CD14-positive monocyte (primary cell): ENCODE measurements at regions of chr4 and their contacts with region 1.

Region 1: DNA sequence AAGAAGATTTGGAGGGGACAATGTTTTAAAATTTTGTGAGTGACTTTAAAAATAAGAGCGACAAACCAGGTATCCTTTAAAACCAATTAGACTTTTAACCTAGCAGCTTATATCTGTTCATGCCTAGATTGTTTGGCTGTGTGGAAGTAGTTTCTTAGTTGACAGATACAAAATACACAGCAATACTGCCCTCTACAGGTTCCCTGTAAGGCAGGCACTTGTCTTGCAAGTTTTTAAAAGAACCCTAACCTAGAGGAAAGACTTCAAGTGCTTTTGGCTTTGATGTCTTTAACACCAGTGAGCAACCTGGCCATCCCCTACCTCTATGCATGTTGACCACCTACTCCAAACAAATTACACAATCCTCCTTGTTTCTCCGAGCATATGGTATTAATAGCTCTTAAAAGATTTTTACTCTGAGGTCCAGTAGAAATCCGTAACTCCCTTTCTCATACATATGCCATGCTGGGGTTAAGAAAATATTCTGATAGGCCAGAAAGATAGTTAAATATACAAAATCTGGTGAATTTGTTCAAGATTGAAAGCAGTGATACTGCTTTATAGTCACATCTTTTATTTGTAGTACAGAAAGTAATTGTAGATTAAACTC is 273.0 kb downstream of the ARHGAP24 start:
- DNase-seq: peak; percentile 60 to 83 (median 71)
- H3K4me3 ChIP-seq: no peak overlapping the region
- H3K4me3 Mint-ChIP-seq: no peak overlapping the region
- H3K27ac ChIP-seq: no peak overlapping the region
- H3K27ac Mint-ChIP-seq: no peak overlapping the region
- H3K4me1 ChIP-seq: peaks cover 10 to 20% of the 10 kb centered on the region in 2 donors
- H3K4me1 Mint-ChIP-seq: peaks cover 21% of the 10 kb centered on the region
- H3K27me3 ChIP-seq: no peaks in the 10 kb centered on the region
- H3K27me3 Mint-ChIP-seq: no peaks in the 10 kb centered on the region
- CTCF ChIP-seq: peak; percentile 82

Region 2: DNA sequence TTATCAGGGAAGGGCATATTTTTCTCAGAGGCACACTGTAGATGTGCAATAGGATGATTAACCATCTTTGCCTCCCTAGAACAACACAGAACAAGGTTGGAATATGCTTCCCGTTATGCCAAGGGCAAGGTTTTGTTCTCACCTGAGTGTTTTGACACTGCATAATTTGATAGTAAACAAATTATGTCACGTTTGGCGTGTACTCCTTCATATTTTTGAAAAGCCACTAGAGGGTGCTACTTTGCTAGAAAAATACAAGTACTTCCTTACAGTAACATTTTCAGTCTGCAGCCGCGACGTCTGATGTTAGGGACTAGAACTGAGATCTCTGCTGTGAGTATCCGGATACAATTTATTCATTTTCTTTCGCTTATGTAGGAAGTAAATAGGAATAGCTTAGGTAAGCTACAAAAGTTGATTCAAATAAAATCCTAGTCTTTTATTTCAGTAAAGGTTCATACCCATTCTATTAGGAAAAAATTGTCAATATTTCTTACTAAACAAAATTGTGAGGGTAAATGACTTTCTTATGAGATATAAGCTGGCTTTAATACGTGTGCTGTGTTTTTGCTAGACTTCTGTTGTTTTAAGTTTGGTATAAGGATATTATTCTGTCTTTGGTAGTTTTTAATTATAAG is 600.4 kb before region 1 on chr4:
- intact Hi-C with region 1: loop called in 1 of 2 experiments (anchors 10 kb)
- DNase-seq: peak; percentile 24 to 53 (median 43)
- H3K4me3 ChIP-seq: no peak overlapping the region
- H3K4me3 Mint-ChIP-seq: peak overlapping the region in 1 of 2 donors; percentile 31
- H3K27ac ChIP-seq: no peak overlapping the region
- H3K27ac Mint-ChIP-seq: no peak overlapping the region
- H3K4me1 ChIP-seq: no peaks in the 10 kb centered on the region
- H3K4me1 Mint-ChIP-seq: peaks cover 2% of the 10 kb centered on the region
- H3K27me3 ChIP-seq: peaks cover 0 to 2% of the 10 kb centered on the region in 2 donors
- H3K27me3 Mint-ChIP-seq: peaks cover 0 to 3% (median 2%) of the 10 kb centered on the region in 3 donors
- CTCF ChIP-seq: peak; percentile 80

Region 3: GRCh38 chr4:85423431-85423830 is 324.6 kb before region 1 on chr4:
- intact Hi-C with region 1: loop called in 1 of 2 experiments (anchors 10 kb)
- DNase-seq: no peak
- H3K4me3 ChIP-seq: no peak overlapping the region
- H3K4me3 Mint-ChIP-seq: no peak overlapping the region
- H3K27ac ChIP-seq: no peak overlapping the region
- H3K27ac Mint-ChIP-seq: no peak overlapping the region
- H3K4me1 ChIP-seq: no peaks in the 10 kb centered on the region
- H3K4me1 Mint-ChIP-seq: no peaks in the 10 kb centered on the region
- H3K27me3 ChIP-seq: no peaks in the 10 kb centered on the region
- H3K27me3 Mint-ChIP-seq: peaks cover 1 to 6% (median 5%) of the 10 kb centered on the region in 3 donors
- CTCF ChIP-seq: no peak

Region 4: GRCh38 chr4:85607624-85608023 is 140.4 kb before region 1 on chr4:
- intact Hi-C with region 1: no loop called
- DNase-seq: peak in 1 of 3 donors; percentile 3
- H3K4me3 ChIP-seq: no peak overlapping the region
- H3K4me3 Mint-ChIP-seq: no peak overlapping the region
- H3K27ac ChIP-seq: no peak overlapping the region
- H3K27ac Mint-ChIP-seq: peak overlapping the region in 1 of 7 donors; percentile 64
- H3K4me1 ChIP-seq: no peaks in the 10 kb centered on the region
- H3K4me1 Mint-ChIP-seq: peaks cover 1% of the 10 kb centered on the region
- H3K27me3 ChIP-seq: no peaks in the 10 kb centered on the region
- H3K27me3 Mint-ChIP-seq: peaks cover 0 to 4% (median 2%) of the 10 kb centered on the region in 3 donors
- CTCF ChIP-seq: no peak

Region 5: DNA sequence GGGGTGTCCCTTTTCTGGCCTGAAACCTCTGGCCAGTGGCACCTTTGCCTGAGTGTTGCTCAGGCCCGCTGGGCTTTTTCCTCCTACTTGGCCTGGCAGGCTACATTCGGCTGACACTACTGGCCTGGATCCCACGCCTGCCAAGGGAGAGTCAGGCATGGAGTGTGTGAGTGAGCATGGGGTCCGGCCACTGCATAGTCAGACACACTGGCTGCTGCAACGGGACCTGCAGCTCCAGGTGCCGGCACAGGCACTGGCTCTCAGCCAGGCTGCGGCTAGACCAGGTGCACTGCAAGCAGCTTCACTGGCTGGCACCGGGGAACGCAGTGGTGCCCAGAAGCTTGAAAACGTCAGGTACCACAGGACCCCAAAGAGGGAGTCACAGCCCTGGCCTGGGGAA is 161.9 kb after region 1 on chr4:
- intact Hi-C with region 1: no loop called
- DNase-seq: no peak
- H3K4me3 ChIP-seq: no peak overlapping the region
- H3K4me3 Mint-ChIP-seq: no peak overlapping the region
- H3K27ac ChIP-seq: no peak overlapping the region
- H3K27ac Mint-ChIP-seq: no peak overlapping the region
- H3K4me1 ChIP-seq: no peaks in the 10 kb centered on the region
- H3K4me1 Mint-ChIP-seq: no peaks in the 10 kb centered on the region
- H3K27me3 ChIP-seq: no peaks in the 10 kb centered on the region
- H3K27me3 Mint-ChIP-seq: peaks cover 0 to 2% (median 0%) of the 10 kb centered on the region in 3 donors
- CTCF ChIP-seq: no peak